Gastrocnemius medialis (tissue), 4 donors: ENCODE measurements at regions of chr1 and their contacts with region 1.

Region 1: DNA sequence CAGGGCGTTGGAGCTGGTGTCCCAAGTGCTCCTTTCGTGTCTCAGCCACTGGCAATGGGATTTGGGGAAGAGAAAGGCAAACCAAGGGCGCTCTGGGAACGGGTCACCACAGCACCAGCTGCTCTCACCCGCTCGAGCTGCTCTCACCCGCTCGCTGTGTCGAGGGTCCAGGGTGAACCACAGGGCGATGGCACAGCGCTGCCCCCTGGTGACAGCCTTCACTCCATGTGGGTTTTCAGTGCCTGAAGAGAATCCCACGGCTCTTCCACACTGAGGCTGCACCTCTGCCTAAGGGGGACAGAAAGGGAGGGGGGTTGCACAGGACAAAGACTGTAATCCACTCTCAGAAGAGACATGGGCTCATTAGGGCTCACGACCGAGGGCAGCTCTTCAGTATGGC is 7.1 kb upstream of the CLDN19 start:
- DNase-seq: no peak
- ATAC-seq: no peak
- H3K4me3 ChIP-seq: no peak overlapping the region
- H3K27ac ChIP-seq: no peak overlapping the region
- H3K4me1 ChIP-seq: no peaks in the 10 kb centered on the region
- H3K27me3 ChIP-seq: no peaks in the 10 kb centered on the region
- CTCF ChIP-seq: peak in 3 of 5 experiments; percentile 42 to 65 (median 57)
- POLR2A ChIP-seq: no peak

Region 2: DNA sequence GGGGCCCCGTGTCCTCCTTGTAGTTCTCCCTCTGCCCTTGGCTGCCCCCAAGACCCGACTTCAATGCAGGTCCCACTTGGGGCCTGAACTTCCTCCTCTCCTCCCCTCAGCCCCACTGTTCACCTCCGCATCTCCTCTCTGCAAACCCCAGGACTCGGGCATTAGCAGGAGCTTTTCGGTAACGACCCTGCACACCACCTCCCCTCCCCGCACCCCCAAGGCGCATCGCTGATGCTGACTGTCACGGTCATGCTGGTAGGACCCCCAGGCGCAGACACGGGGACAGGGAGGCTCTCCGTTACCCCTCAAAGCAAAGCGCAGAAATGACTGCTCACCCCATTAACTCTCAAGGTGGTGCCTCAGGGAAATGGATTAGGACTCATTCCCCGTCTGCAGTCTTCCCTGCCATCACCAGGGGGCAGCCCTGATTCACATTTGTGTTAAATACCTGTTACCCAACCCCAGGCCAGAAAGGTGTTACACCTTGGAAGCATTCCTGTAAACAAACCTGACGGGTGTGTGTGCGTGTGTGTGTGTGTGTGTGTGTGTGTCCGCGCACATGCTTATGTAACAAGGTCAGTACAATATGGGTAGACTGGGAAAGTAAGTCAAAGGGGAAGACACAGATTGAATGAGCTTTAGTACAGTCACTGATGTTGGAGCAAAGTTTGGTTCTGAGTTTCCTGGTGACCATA is 600.4 kb before region 1 on chr1:
- in situ Hi-C with region 1: loop called in 1 of 4 experiments (anchors 25 kb)
- intact Hi-C with region 1: loop called (anchors 10 kb)
- DNase-seq: peak in 1 of 2 donors; percentile 28
- ATAC-seq: peak in 1 of 2 donors; percentile 65
- H3K4me3 ChIP-seq: no peak overlapping the region
- H3K27ac ChIP-seq: no peak overlapping the region
- H3K4me1 ChIP-seq: no peaks in the 10 kb centered on the region
- H3K27me3 ChIP-seq: peaks cover 7 to 22% (median 21%) of the 10 kb centered on the region in 3 donors
- CTCF ChIP-seq: peak; percentile 68 to 85 (median 73)
- POLR2A ChIP-seq: no peak

Region 3: DNA sequence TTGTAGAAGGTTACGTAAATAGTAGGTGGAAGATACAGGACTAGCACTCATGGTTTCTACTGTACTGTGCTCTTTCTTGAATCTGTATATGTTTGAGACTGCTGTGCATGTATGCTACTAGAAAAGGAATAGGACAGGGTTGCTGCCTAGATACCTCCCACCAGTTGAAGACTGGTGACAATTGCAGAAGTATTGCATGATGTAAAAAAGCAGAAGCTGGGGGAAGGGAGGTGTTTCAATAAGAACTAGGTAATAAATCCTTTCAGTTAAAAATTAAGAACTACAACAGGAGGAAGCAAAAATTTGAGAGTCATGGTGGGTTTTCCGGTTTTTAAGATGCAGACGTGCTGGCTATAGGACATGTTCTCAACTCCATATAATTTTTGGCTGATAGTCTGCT is 195.9 kb before region 1 on chr1:
- in situ Hi-C with region 1: loop called in 1 of 4 experiments (anchors 25 kb)
- intact Hi-C with region 1: no loop called
- DNase-seq: no peak
- ATAC-seq: no peak
- H3K4me3 ChIP-seq: no peak overlapping the region
- H3K27ac ChIP-seq: no peak overlapping the region
- H3K4me1 ChIP-seq: no peaks in the 10 kb centered on the region
- H3K27me3 ChIP-seq: no peaks in the 10 kb centered on the region
- CTCF ChIP-seq: no peak
- POLR2A ChIP-seq: no peak

Region 4: GRCh38 chr1:42576935-42577334 is 170.2 kb before region 1 on chr1:
- in situ Hi-C with region 1: loop called in 3 of 4 experiments (anchors 10 to 25 kb)
- intact Hi-C with region 1: no loop called
- DNase-seq: no peak
- ATAC-seq: no peak
- H3K4me3 ChIP-seq: no peak overlapping the region
- H3K27ac ChIP-seq: no peak overlapping the region
- H3K4me1 ChIP-seq: no peaks in the 10 kb centered on the region
- H3K27me3 ChIP-seq: no peaks in the 10 kb centered on the region
- CTCF ChIP-seq: no peak
- POLR2A ChIP-seq: no peak

Region 5: GRCh38 chr1:42586016-42586415 is 161.1 kb before region 1 on chr1:
- in situ Hi-C with region 1: loop called in 1 of 4 experiments (anchors 10 kb)
- intact Hi-C with region 1: no loop called
- DNase-seq: no peak
- ATAC-seq: no peak
- H3K4me3 ChIP-seq: no peak overlapping the region
- H3K27ac ChIP-seq: no peak overlapping the region
- H3K4me1 ChIP-seq: no peaks in the 10 kb centered on the region
- H3K27me3 ChIP-seq: no peaks in the 10 kb centered on the region
- CTCF ChIP-seq: no peak
- POLR2A ChIP-seq: no peak